GM12878 (cell line): ENCODE measurements at regions of chr22 and their contacts with region 1.

Region 1: DNA sequence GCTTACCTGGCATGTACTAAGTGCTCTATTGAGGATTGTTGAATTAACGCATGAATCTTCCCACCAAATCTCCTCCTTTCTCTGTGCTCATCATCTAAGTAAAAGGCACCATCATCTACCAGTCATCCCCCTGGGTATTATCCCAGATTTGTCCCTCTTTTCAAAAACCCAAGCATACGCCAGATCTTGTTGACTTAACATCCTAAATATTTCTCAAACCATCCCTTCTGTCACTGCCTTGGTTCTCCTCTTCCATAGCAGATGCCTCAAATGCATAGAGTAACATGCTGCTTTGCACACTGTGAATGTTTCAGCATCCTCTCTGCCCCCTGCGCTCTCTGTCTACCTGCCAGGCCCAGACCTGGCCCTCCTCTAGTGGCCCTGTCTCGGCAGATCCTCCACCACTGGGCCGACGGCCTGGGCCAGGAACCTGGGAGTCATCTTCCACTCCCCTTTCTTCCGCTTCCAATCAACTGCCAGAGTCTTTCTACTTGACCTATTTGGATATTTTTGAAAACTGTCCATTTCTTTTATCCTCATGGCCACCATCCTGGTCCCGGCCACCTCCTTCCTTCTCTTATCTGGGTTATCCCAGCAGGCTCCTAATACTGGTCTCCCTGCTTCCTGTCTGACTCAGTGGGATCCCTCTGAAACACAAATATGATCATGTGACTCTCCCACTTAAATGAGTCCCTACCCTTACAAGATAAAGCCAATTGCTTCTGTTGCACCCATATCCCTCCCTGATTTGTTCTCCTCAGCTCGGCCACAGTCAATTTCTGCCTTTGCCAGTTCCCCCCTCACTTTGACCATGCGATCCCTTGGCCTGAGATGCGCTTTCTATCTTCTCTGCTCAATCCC is 3.4 kb upstream of the TAB1 start:
- DNase-seq: no peak
- ATAC-seq: no peak
- H3K4me3 ChIP-seq: no peak overlapping the region
- H3K27ac ChIP-seq: no peak overlapping the region
- H3K4me1 ChIP-seq: peaks cover 7% of the 10 kb centered on the region
- H3K27me3 ChIP-seq: no peaks in the 10 kb centered on the region
- CTCF ChIP-seq: no peak
- EP300 ChIP-seq: no peak
- POLR2A ChIP-seq: no peak
- RAD21 ChIP-seq: no peak

Region 2: DNA sequence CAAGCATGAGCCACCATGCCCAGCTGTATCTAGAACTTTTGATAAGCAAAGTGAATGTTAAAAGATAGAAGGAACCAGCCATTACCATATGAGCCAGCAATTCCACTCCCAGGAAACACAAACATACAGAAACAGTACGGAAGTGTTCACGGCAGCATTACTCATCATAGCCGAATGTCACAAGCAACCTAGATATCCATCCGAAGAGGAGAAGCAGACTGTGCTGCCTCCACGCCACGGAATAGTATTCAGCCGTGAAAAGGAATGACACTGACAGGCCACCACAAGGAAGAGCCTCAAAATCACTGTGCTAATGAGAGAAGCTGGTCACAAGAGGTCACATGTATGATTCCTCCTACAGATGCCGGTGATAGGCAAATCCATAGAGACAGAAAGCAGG is 43.0 kb after region 1 on chr22:
- CTCF ChIA-PET with region 1: interaction called, 37 read pairs
- POLR2A ChIA-PET with region 1: interaction called, 3 read pairs
- RAD21 ChIA-PET with region 1: interaction called, 13 read pairs
- SMC1A ChIA-PET with region 1: interaction called, 7 read pairs
- in situ Hi-C with region 1: no loop called
- intact Hi-C with region 1: no loop called
- DNase-seq: no peak
- ATAC-seq: no peak
- H3K4me3 ChIP-seq: no peak overlapping the region
- H3K27ac ChIP-seq: no peak overlapping the region
- H3K4me1 ChIP-seq: peaks cover 42% of the 10 kb centered on the region
- H3K27me3 ChIP-seq: no peaks in the 10 kb centered on the region
- CTCF ChIP-seq: no peak
- EP300 ChIP-seq: no peak
- POLR2A ChIP-seq: no peak
- RAD21 ChIP-seq: no peak

Region 3: DNA sequence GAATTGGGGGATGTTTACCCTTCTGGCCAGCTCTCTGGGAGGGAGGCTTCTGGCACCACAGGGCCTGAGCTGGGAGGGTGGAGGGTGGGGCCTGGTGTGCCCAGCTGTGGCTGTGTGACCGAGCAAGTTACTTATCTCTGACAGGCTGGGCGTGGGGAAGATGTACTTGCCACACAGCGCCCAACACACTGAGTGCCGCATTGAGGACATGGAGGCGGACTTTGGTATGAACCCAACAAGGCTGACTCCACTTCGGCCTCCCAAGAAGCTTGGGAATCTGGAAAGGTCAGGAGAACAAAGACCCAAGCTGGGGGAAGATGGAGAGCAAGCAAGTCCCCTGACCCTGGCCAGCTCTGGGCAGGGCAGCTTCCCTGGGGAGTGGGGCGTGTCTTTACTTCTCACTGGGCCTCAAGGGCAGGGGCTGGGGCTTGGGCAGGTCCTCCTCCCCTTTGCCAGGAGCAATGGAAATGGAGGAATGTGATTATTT is 58.3 kb after region 1 on chr22:
- CTCF ChIA-PET with region 1: no interaction called
- POLR2A ChIA-PET with region 1: interaction called, 10 read pairs
- RAD21 ChIA-PET with region 1: no interaction called
- SMC1A ChIA-PET with region 1: interaction called, 5 read pairs
- in situ Hi-C with region 1: no loop called
- intact Hi-C with region 1: no loop called
- DNase-seq: no peak
- ATAC-seq: 0 out of 3 replicates have a peak, but pooled peaks have one; percentile 8
- H3K4me3 ChIP-seq: no peak overlapping the region
- H3K27ac ChIP-seq: no peak overlapping the region
- H3K4me1 ChIP-seq: peaks cover 20% of the 10 kb centered on the region
- H3K27me3 ChIP-seq: no peaks in the 10 kb centered on the region
- CTCF ChIP-seq: no peak
- EP300 ChIP-seq: no peak
- POLR2A ChIP-seq: no peak
- RAD21 ChIP-seq: no peak

Region 4: GRCh38 chr22:39462443-39463221 is 66.5 kb after region 1 on chr22:
- CTCF ChIA-PET with region 1: interaction called, 4 read pairs
- POLR2A ChIA-PET with region 1: interaction called, 3 read pairs
- RAD21 ChIA-PET with region 1: no interaction called
- SMC1A ChIA-PET with region 1: interaction called, 4 read pairs
- in situ Hi-C with region 1: no loop called
- intact Hi-C with region 1: loop called (anchors 2 kb)
- DNase-seq: peak; percentile 62
- ATAC-seq: peak; percentile 32
- H3K4me3 ChIP-seq: no peak overlapping the region; the same call in 1 of the 2 replicates
- H3K27ac ChIP-seq: peak overlapping the region; percentile 70
- H3K4me1 ChIP-seq: peaks cover 61% of the 10 kb centered on the region
- H3K27me3 ChIP-seq: no peaks in the 10 kb centered on the region
- CTCF ChIP-seq: peak in 2 of 3 experiments; percentile 7 to 46; a peak in 3 of 6 replicates
- EP300 ChIP-seq: no peak; a peak in 1 of 4 replicates
- POLR2A ChIP-seq: no peak
- RAD21 ChIP-seq: peak; percentile 23; the same call in 1 of the 2 replicates

Region 5: GRCh38 chr22:39496131-39496838 is 100.1 kb after region 1 on chr22:
- CTCF ChIA-PET with region 1: interaction called, 15 read pairs
- POLR2A ChIA-PET with region 1: interaction called, 3 read pairs
- RAD21 ChIA-PET with region 1: no interaction called
- SMC1A ChIA-PET with region 1: interaction called, 6 read pairs
- in situ Hi-C with region 1: no loop called
- intact Hi-C with region 1: no loop called
- DNase-seq: no peak
- ATAC-seq: peak; percentile 93
- H3K4me3 ChIP-seq: no peak overlapping the region
- H3K27ac ChIP-seq: no peak overlapping the region
- H3K4me1 ChIP-seq: no peaks in the 10 kb centered on the region
- H3K27me3 ChIP-seq: no peaks in the 10 kb centered on the region
- CTCF ChIP-seq: peak; percentile 68 to 86 (median 82)
- EP300 ChIP-seq: no peak
- POLR2A ChIP-seq: no peak
- RAD21 ChIP-seq: peak; percentile 42

Region 6: DNA sequence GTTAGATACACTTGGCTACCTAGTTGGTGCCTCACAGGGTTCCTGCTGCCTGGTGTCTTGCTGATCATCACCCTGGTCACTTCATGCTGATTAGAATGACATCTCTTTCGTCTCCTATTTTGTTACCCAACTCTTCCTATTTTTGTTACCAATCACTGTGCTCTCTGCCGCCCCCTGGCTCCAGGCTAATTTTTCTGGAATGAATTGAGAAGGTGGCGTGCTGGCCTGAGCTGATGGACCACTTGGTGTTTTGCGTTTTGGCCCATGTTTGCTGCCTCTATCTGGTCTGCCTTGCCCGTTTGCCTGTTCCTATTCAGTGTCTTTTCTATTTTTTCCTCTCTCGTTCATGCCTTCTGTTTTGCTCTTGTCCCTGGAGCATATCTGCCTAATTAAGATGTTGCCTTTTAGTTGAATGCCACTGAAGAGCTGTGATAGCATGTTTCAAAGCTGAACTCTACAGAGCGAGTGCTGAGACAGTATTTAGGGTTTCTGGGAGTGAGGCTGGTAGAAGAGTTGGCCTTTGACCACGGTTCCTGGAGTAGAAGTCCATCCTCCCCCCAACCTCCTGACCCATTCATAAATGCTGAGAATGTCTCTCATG is 118.3 kb after region 1 on chr22:
- CTCF ChIA-PET with region 1: interaction called, 16 read pairs
- POLR2A ChIA-PET with region 1: interaction called, 3 read pairs
- RAD21 ChIA-PET with region 1: interaction called, 14 read pairs
- SMC1A ChIA-PET with region 1: interaction called, 10 read pairs
- in situ Hi-C with region 1: no loop called
- intact Hi-C with region 1: loop called (anchors 5 kb)
- DNase-seq: no peak
- ATAC-seq: peak; percentile 59
- H3K4me3 ChIP-seq: no peak overlapping the region
- H3K27ac ChIP-seq: no peak overlapping the region
- H3K4me1 ChIP-seq: peaks cover 16% of the 10 kb centered on the region
- H3K27me3 ChIP-seq: no peaks in the 10 kb centered on the region
- CTCF ChIP-seq: peak; percentile 66 to 74 (median 70)
- EP300 ChIP-seq: no peak
- POLR2A ChIP-seq: no peak
- RAD21 ChIP-seq: peak; percentile 51

Region 7: DNA sequence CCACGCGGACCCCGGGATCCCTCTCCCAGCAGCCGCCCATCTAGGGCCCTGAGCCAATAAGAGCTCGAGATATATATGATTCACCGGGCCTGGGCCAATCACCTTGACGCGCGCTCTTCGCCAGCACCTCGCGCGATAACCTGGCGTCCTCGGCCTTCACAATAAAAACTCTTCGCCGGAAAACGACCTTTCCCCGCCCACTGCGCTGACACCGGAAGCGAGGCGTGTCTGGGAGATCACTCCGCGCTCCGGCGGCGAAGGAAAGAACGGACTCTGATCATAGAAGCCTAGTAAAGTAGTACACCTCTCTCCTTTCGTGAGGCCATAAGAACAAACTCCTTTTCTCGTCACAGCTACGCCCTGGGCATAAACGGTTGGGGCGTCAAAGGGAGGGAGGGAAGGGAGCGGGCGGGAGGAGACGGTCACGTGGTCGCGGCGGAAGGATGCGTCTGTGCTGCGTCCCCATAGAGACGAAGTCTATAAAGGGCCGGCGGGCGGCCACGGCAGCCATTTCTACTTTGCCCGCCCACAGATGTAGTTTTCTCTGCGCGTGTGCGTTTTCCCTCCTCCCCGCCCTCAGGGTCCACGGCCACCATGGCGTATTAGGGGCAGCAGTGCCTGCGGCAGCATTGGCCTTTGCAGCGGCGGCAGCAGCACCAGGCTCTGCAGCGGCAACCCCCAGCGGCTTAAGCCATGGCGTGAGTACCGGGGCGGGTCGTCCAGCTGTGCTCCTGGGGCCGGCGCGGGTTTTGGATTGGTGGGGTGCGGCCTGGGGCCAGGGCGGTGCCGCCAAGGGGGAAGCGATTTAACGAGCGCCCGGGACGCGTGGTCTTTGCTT is 124.1 kb after region 1 on chr22 and contains the start of gene ATF4:
- CTCF ChIA-PET with region 1: interaction called, 16 read pairs
- POLR2A ChIA-PET with region 1: interaction called, 3 read pairs
- RAD21 ChIA-PET with region 1: interaction called, 14 read pairs
- SMC1A ChIA-PET with region 1: interaction called, 5 read pairs
- in situ Hi-C with region 1: no loop called
- intact Hi-C with region 1: loop called (anchors 5 kb)
- DNase-seq: peak; percentile 93
- ATAC-seq: peak; percentile 91
- H3K4me3 ChIP-seq: peak within 1 kb of the TSS; percentile 97
- H3K27ac ChIP-seq: peak within 1 kb of the TSS; percentile 96
- H3K4me1 ChIP-seq: peaks cover 23% of the 10 kb centered on the region
- H3K27me3 ChIP-seq: no peaks in the 10 kb centered on the region
- CTCF ChIP-seq: no peak
- EP300 ChIP-seq: no peak
- POLR2A ChIP-seq: peak; percentile 93
- RAD21 ChIP-seq: no peak
- polyA plus RNA-seq, gene ATF4: 88.3 to 187 TPM